AG04449 (cell line): ENCODE measurements at regions of chr5 and their contacts with region 1.

Region 1: GRCh38 chr5:157142317-157143126 is at the start of gene MED7:
- DNase-seq: peak; percentile 96
- H3K4me3 ChIP-seq: peak within 1 kb of the TSS; percentile 97
- CTCF ChIP-seq: no peak

Region 2: DNA sequence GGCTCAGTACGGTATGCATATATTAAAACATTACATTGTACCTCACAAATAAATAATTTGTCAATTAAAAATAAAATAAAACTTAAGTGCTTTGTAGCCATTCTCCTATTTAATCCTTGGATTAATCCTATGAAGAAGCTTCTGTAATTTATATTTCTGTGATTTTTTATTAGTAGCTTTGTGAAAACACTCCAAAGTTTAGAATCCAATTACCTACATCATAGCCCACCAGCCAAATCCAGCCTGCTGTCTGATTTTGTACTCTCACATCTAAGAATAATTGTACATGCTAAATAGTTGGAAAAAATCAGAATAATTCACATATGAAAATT is 10.3 kb before region 1 on chr5:
- CTCF ChIA-PET with region 1: interaction called, 22 read pairs
- POLR2A ChIA-PET with region 1: no interaction called
- DNase-seq: no peak
- H3K4me3 ChIP-seq: no peak overlapping the region
- CTCF ChIP-seq: no peak